Activated CD4-positive, alpha-beta T cell treated with anti-CD3 and anti-CD28 coated beads for 36 hours (primary cell): ENCODE measurements at regions of chr5 and their contacts with region 1.

Region 1: GRCh38 chr5:101390151-101390908 is 487.2 kb upstream of the ST8SIA4 start:
- DNase-seq: peak; percentile 8
- ATAC-seq: no peak
- H3K4me3 Mint-ChIP-seq: no peak overlapping the region
- H3K27ac Mint-ChIP-seq: no peak overlapping the region
- H3K4me1 Mint-ChIP-seq: no peaks in the 10 kb centered on the region
- H3K27me3 Mint-ChIP-seq: peaks cover 4% of the 10 kb centered on the region

Region 2: GRCh38 chr5:100479079-100479688 is 911.1 kb before region 1 on chr5:
- CTCF ChIA-PET with region 1: no interaction called
- POLR2A ChIA-PET with region 1: no interaction called
- intact Hi-C with region 1: loop called (anchors 1 to 5 kb)
- DNase-seq: no peak
- ATAC-seq: no peak
- H3K4me3 Mint-ChIP-seq: no peak overlapping the region
- H3K27ac Mint-ChIP-seq: no peak overlapping the region
- H3K4me1 Mint-ChIP-seq: no peaks in the 10 kb centered on the region
- H3K27me3 Mint-ChIP-seq: no peaks in the 10 kb centered on the region

Region 3: DNA sequence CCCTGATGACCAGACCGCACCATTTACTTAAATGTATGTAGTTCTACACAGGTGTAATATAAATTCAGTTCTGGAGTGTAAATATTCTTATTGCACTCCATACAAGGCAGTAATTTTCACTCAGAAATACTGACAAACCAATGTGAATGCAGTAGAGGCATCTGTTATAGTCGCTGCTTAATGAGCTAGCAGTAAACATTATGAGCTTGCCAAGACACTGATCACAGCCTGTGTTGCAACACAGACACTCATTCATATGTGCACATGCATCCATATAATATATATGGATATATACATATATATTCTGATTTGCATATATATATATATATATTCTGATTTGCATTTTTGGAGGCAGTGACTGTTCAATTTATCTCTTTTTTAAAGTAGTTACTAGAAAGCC is 52.1 kb before region 1 on chr5:
- CTCF ChIA-PET with region 1: no interaction called
- POLR2A ChIA-PET with region 1: no interaction called
- intact Hi-C with region 1: no loop called
- DNase-seq: no peak
- ATAC-seq: no peak
- H3K4me3 Mint-ChIP-seq: no peak overlapping the region
- H3K27ac Mint-ChIP-seq: no peak overlapping the region
- H3K4me1 Mint-ChIP-seq: no peaks in the 10 kb centered on the region
- H3K27me3 Mint-ChIP-seq: no peaks in the 10 kb centered on the region